AG04450 (cell line): ENCODE measurements at regions of chr11 and their contacts with region 1.

Region 1: GRCh38 chr11:8099291-8099899 is 18.4 kb downstream of the TUB start:
- DNase-seq: peak; percentile 65
- H3K4me3 ChIP-seq: no peak overlapping the region
- H3K27ac ChIP-seq: no peak overlapping the region
- H3K27me3 ChIP-seq: no peaks in the 10 kb centered on the region
- CTCF ChIP-seq: peak; percentile 93

Region 2: DNA sequence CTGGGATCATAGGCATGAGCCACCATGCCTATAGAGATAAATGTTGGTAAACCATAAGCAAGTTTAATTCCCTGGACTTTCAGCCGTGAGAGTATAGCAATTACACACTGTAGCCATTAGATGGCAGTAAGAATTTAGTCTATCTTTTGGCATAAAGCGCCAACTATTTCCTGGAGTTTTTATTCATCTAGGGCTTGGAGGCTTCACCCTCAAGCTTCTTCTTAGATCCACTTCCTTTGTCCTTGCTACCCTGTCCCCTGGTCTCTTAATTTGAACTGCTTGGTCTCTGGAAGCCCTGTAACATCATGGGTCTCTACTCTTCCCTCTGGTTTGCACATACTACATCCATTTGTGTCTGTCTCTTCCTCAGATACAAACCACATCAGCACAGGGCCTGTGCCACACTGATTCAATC is 206.5 kb before region 1 on chr11:
- CTCF ChIA-PET with region 1: interaction called, 16 read pairs
- POLR2A ChIA-PET with region 1: no interaction called
- DNase-seq: peak; percentile 50
- H3K4me3 ChIP-seq: no peak overlapping the region
- H3K27ac ChIP-seq: peak overlapping the region; percentile 42
- H3K27me3 ChIP-seq: no peaks in the 10 kb centered on the region
- CTCF ChIP-seq: peak; percentile 72

Region 3: DNA sequence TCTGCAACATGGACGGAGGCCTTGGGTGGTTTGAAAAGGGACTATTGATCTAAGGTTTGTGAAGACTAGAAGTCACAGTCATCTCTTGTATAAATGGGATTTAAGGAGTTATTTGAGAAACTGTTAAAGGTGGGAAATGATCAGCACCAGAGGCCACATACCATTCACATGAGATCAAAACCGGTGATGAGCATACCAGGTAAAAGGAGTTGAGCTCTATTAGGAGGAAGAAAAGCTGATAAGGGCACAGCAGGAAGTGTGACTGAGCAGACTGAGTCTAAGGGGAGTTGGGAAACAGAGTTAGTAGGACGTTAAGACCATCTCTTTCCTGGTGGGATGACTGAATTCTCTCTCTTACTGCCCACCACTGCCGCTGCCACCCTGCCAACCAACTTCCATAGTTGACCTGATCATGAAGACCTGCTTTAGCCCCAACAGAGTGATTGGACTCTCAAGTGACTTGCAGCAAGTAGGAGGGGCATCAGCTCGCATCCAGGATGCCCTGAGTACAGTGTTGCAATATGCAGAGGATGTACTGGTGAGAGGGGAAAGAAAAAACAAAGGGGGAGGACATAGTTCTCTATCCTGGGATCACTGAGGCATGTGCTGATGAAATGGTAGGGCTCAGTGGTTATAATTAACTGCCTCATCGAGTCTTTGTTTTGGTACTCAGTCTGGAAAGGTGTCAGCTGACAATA is 104.7 kb before region 1 on chr11:
- CTCF ChIA-PET with region 1: interaction called, 19 read pairs
- POLR2A ChIA-PET with region 1: no interaction called
- DNase-seq: no peak
- H3K4me3 ChIP-seq: no peak overlapping the region
- H3K27ac ChIP-seq: no peak overlapping the region
- H3K27me3 ChIP-seq: no peaks in the 10 kb centered on the region
- CTCF ChIP-seq: no peak

Region 4: GRCh38 chr11:8018484-8019313 is 80.7 kb before region 1 on chr11:
- CTCF ChIA-PET with region 1: interaction called, 66 read pairs
- POLR2A ChIA-PET with region 1: no interaction called
- DNase-seq: peak; percentile 16
- H3K4me3 ChIP-seq: peak overlapping the region; percentile 70
- H3K27ac ChIP-seq: no peak overlapping the region
- H3K27me3 ChIP-seq: peaks cover 2% of the 10 kb centered on the region
- CTCF ChIP-seq: no peak

Region 5: GRCh38 chr11:8056810-8057463 is 42.5 kb before region 1 on chr11:
- CTCF ChIA-PET with region 1: interaction called, 20 read pairs
- POLR2A ChIA-PET with region 1: no interaction called
- DNase-seq: no peak
- H3K4me3 ChIP-seq: no peak overlapping the region
- H3K27ac ChIP-seq: no peak overlapping the region
- H3K27me3 ChIP-seq: peaks cover under 1% of the 10 kb centered on the region
- CTCF ChIP-seq: no peak

Region 6: GRCh38 chr11:8087185-8087584 is 12.2 kb before region 1 on chr11:
- CTCF ChIA-PET with region 1: interaction called, 63 read pairs
- POLR2A ChIA-PET with region 1: interaction called, 4 read pairs
- DNase-seq: no peak
- H3K4me3 ChIP-seq: no peak overlapping the region
- H3K27ac ChIP-seq: no peak overlapping the region
- H3K27me3 ChIP-seq: no peaks in the 10 kb centered on the region
- CTCF ChIP-seq: peak; percentile 25